Activated T-helper 2 cell treated with anti-CD3 and anti-CD28 coated beads, Interferon-gamma antibody, Interleukin-2, Interleukin-4, amounts not matched to agents 10 μg/mL and 5 μg/mL and 100 μg/mL, durations not matched to agents 14 hours and 24 hours and 36 hours (primary cell): ENCODE measurements at regions of chr5 and their contacts with region 1.

Region 1: DNA sequence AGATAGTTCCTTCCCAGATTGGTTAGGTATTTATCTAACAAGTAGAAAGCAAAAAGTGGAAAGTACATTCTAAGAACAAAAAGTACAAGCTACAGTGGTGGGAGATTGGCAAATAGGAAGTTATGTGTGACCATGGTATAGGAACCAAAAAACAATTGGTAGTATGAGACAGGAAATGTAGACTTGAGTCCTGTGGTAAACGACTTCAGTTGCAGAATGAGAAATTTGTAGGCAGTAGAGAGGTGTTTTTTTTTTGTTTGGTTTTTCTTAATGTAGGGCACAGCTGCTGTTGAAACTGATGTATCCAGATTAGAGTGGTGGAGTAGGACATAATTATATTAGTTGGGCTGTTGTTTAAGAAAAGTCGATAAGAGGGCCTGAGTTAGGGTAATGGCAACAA is 72.0 kb downstream of the CCNH start:
- DNase-seq: no peak
- H3K4me3 Mint-ChIP-seq: peak overlapping the region; percentile 64
- H3K27ac Mint-ChIP-seq: peak overlapping the region; percentile 82
- H3K4me1 Mint-ChIP-seq: peaks cover 27% of the 10 kb centered on the region
- H3K27me3 Mint-ChIP-seq: no peaks in the 10 kb centered on the region

Region 2: DNA sequence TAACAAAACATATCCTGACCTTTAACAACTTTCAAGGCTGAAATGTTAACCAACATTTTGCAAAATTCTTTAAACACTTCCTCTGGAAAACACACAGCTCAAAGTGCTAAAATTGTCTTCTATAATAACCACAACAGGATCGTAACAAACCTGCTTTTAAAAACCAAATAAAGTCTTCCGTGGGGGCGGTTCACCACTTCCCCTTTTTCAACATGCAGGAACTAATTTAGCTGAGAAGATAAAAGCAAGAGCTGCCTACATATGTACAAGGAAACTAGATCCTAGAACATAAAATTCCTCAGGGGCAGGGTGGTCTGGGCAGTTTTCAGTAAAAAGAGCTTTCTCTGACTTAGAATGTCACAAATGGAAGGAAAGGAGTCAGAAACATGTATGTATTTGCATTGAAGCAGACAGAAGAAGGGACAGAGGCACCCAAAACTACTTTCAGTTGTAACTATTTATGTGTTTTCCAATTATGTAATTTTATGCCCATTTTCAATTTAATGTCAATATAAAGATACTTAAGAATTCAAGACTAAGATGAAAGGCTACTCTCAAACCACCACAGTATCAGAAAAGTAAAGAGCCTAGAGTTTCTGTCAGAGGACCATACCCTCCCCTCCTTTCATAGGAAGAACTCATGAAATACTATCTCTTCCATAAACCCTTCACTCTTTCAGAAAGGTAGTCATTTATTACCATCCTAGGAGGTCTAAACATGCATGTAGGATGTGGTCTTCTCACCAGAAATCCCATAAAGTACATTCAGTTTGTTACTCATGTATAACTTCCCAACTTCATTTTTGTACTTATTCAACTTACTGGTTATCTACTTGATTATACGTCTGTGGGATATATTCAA is 259.0 kb before region 1 on chr5:
- intact Hi-C with region 1: loop called (anchors 2 kb)
- DNase-seq: peak; percentile 30
- H3K4me3 Mint-ChIP-seq: peak overlapping the region; percentile 41
- H3K27ac Mint-ChIP-seq: peak overlapping the region; percentile 54
- H3K4me1 Mint-ChIP-seq: peaks cover 41% of the 10 kb centered on the region
- H3K27me3 Mint-ChIP-seq: no peaks in the 10 kb centered on the region

Region 3: GRCh38 chr5:87282269-87282668 is 58.4 kb before region 1 on chr5:
- intact Hi-C with region 1: loop called (anchors 1 kb)
- DNase-seq: no peak
- H3K4me3 Mint-ChIP-seq: peak overlapping the region; percentile 64
- H3K27ac Mint-ChIP-seq: peak overlapping the region; percentile 74
- H3K4me1 Mint-ChIP-seq: peaks cover 40% of the 10 kb centered on the region
- H3K27me3 Mint-ChIP-seq: no peaks in the 10 kb centered on the region

Region 4: GRCh38 chr5:87300744-87301143 is 40.0 kb before region 1 on chr5:
- intact Hi-C with region 1: loop called (anchors 2 kb)
- DNase-seq: no peak
- H3K4me3 Mint-ChIP-seq: no peak overlapping the region
- H3K27ac Mint-ChIP-seq: no peak overlapping the region
- H3K4me1 Mint-ChIP-seq: peaks cover 57% of the 10 kb centered on the region
- H3K27me3 Mint-ChIP-seq: no peaks in the 10 kb centered on the region

Region 5: DNA sequence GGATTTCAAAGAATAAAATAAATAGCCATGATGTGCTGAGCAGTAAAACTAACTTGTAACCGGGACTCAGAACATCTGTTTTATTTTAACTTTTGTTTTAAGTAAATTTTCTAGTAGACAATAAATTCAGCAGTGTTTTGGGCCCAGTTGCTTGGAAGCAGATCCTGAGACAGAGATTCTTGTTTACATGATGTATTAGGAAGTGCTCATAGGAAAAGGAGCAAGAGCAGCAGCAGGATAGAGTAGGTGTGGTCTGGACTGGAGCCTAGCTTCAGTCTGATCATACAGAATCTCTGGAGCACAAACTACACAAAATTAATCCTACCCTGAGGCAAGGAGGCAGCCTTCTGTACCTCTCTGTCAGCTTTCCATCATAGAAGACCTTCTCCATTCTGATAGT is 211.2 kb after region 1 on chr5:
- intact Hi-C with region 1: no loop called
- DNase-seq: no peak
- H3K4me3 Mint-ChIP-seq: no peak overlapping the region
- H3K27ac Mint-ChIP-seq: no peak overlapping the region
- H3K4me1 Mint-ChIP-seq: no peaks in the 10 kb centered on the region
- H3K27me3 Mint-ChIP-seq: no peaks in the 10 kb centered on the region